Posterior cingulate gyrus (tissue), 11 donors: ENCODE measurements at regions of chr3 and their contacts with region 1.

Region 1: DNA sequence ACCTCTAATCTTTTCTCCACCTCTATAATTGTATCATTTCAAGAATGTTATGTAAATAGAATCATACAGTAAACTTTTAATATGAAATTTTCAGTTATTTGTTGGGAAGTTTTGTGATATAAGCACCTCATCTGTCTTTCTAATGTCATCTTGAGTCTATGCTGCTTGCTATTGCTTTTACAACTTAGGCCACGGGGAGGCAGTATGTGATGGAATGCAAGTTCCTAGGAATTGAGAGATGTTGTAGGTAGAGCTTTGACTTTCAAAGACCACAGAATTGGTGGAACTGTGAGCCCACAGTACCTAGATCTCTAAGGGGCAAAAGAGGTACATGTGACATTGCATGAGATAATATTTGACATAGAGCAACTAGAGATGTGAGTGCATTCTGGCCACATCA is 328.3 kb downstream of the MFSD1 start:
- DNase-seq: no peak

Region 2: GRCh38 chr3:159252772-159253384 is 122.8 kb after region 1 on chr3:
- intact Hi-C with region 1: loop called (anchors 10 kb)
- DNase-seq: no peak